ENCODE measurements at regions of chr14 and their contacts with region 1.

Region 1: GRCh38 chr14:24232121-24232644 is at the start of gene NEDD8:
- DNase-seq: peak; percentile 72 to 93 (median 89)
- ATAC-seq: peak; percentile 88
- H3K4me3 ChIP-seq: peak within 1 kb of the TSS; percentile 92 to 98
- H3K4me3 Mint-ChIP-seq: peak within 1 kb of the TSS; percentile 97
- H3K27ac ChIP-seq: peak within 1 kb of the TSS; percentile 72 to 87
- H3K27ac Mint-ChIP-seq: peak within 1 kb of the TSS; percentile 97
- H3K4me1 ChIP-seq: peaks cover 27% of the 10 kb centered on the region
- H3K4me1 Mint-ChIP-seq: peaks cover 59% of the 10 kb centered on the region
- H3K27me3 ChIP-seq: no peaks in the 10 kb centered on the region
- H3K27me3 Mint-ChIP-seq: no peaks in the 10 kb centered on the region
- CTCF ChIP-seq: no peak
- total RNA-seq, gene NEDD8: 39.9 to 48.5 TPM

Region 2: GRCh38 chr14:24146978-24147760 is 85.0 kb before region 1 on chr14 and contains the start of gene RNF31:
- CTCF ChIA-PET with region 1: no interaction called
- POLR2A ChIA-PET with region 1: interaction called, 3 read pairs
- intact Hi-C with region 1: loop called in 1 of 2 experiments (anchors 1 kb)
- DNase-seq: peak; percentile 93 to 99 (median 97)
- ATAC-seq: peak; percentile 89
- H3K4me3 ChIP-seq: peak within 1 kb of the TSS; percentile 96 to 99
- H3K4me3 Mint-ChIP-seq: peak within 1 kb of the TSS; percentile 95
- H3K27ac ChIP-seq: peak within 1 kb of the TSS; percentile 79 to 91
- H3K27ac Mint-ChIP-seq: peak within 1 kb of the TSS; percentile 93
- H3K4me1 ChIP-seq: peaks cover 34% of the 10 kb centered on the region
- H3K4me1 Mint-ChIP-seq: peaks cover 53% of the 10 kb centered on the region
- H3K27me3 ChIP-seq: no peaks in the 10 kb centered on the region
- H3K27me3 Mint-ChIP-seq: no peaks in the 10 kb centered on the region
- CTCF ChIP-seq: no peak
- total RNA-seq, gene RNF31: 45.4 to 51.7 TPM

Region 3: DNA sequence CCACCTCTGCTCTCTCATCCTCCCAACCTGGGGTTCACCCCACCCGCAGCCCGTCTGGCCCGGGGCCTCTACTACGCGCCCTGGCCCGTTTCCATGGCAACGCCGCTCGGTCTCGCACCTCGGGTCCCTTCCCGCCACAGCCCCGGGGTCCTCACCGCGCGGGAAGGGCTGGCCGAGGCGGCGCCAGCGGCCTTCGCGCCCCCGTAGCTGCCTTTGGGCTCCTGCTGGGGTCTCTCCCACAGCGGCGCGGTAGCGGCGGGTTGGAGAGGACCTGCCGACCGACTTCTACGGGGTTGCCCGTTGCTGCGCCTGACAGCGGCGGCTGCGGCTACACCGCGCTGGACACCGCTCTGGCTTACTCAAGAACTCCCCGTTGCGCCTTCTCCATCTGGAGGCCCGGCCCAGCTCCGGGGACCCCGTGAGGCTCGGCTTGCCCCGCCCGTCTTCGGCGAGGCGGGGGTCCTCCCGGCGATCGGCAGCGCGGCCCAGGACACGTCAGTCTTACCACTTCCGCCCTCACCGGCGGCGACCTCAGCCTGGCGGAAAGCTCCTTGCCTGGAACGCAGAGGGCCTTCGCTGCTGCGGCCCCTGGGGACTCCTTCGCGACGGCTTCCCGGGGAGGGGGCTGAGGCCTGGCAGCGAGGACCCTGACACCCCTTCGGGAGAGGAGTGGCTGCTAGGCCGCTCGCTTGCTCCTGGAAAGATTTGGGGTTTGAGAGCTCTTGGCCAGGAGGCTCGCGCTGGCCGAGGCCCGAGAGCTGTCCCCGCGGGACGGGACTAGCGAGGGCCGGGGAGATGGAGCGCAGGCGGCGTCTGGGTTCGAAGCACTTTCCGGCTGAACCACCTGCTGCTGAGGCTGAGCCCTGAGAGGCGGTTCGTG is 36.8 kb before region 1 on chr14 and contains the start of gene TM9SF1:
- CTCF ChIA-PET with region 1: no interaction called
- POLR2A ChIA-PET with region 1: interaction called, 4 read pairs
- intact Hi-C with region 1: loop called (anchors 1 kb)
- DNase-seq: peak; percentile 81 to 96 (median 91)
- ATAC-seq: peak; percentile 83
- H3K4me3 ChIP-seq: peak within 1 kb of the TSS; percentile 87 to 94
- H3K4me3 Mint-ChIP-seq: peak within 1 kb of the TSS; percentile 94
- H3K27ac ChIP-seq: peak within 1 kb of the TSS; percentile 99 to 100
- H3K27ac Mint-ChIP-seq: peak within 1 kb of the TSS; percentile 98
- H3K4me1 ChIP-seq: peaks cover 31% of the 10 kb centered on the region
- H3K4me1 Mint-ChIP-seq: peaks cover 50% of the 10 kb centered on the region
- H3K27me3 ChIP-seq: no peaks in the 10 kb centered on the region
- H3K27me3 Mint-ChIP-seq: no peaks in the 10 kb centered on the region
- CTCF ChIP-seq: no peak
- total RNA-seq, gene TM9SF1: 17.5 to 20.4 TPM

Region 4: DNA sequence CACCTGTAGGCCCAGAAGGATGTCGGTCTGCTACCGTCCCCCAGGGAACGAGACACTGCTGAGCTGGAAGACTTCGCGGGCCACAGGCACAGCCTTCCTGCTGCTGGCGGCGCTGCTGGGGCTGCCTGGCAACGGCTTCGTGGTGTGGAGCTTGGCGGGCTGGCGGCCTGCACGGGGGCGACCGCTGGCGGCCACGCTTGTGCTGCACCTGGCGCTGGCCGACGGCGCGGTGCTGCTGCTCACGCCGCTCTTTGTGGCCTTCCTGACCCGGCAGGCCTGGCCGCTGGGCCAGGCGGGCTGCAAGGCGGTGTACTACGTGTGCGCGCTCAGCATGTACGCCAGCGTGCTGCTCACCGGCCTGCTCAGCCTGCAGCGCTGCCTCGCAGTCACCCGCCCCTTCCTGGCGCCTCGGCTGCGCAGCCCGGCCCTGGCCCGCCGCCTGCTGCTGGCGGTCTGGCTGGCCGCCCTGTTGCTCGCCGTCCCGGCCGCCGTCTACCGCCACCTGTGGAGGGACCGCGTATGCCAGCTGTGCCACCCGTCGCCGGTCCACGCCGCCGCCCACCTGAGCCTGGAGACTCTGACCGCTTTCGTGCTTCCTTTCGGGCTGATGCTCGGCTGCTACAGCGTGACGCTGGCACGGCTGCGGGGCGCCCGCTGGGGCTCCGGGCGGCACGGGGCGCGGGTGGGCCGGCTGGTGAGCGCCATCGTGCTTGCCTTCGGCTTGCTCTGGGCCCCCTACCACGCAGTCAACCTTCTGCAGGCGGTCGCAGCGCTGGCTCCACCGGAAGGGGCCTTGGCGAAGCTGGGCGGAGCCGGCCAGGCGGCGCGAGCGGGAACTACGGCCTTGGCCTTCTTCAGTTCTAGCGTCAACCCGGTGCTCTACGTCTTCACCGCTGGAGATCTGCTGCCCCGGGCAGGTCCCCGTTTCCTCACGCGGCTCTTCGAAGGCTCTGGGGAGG is 78.7 kb after region 1 on chr14 and contains the start of gene LTB4R:
- CTCF ChIA-PET with region 1: interaction called, 13 read pairs
- POLR2A ChIA-PET with region 1: interaction called, 7 read pairs
- intact Hi-C with region 1: no loop called
- DNase-seq: peak; percentile 41 to 89 (median 68)
- ATAC-seq: peak; percentile 80
- H3K4me3 ChIP-seq: peak within 1 kb of the TSS; percentile 52 to 57
- H3K4me3 Mint-ChIP-seq: peak within 1 kb of the TSS; percentile 75
- H3K27ac ChIP-seq: peak within 1 kb of the TSS; percentile 63 to 78
- H3K27ac Mint-ChIP-seq: peak within 1 kb of the TSS; percentile 90
- H3K4me1 ChIP-seq: peaks cover 62% of the 10 kb centered on the region
- H3K4me1 Mint-ChIP-seq: peaks cover 72% of the 10 kb centered on the region
- H3K27me3 ChIP-seq: no peaks in the 10 kb centered on the region
- H3K27me3 Mint-ChIP-seq: no peaks in the 10 kb centered on the region
- CTCF ChIP-seq: no peak
- total RNA-seq, gene LTB4R: 15.4 to 16.7 TPM

Measured in CD8-positive, alpha-beta T cell (primary cell).